H1 (cell line): ENCODE measurements at regions of chr6 and their contacts with region 1.

Region 1: DNA sequence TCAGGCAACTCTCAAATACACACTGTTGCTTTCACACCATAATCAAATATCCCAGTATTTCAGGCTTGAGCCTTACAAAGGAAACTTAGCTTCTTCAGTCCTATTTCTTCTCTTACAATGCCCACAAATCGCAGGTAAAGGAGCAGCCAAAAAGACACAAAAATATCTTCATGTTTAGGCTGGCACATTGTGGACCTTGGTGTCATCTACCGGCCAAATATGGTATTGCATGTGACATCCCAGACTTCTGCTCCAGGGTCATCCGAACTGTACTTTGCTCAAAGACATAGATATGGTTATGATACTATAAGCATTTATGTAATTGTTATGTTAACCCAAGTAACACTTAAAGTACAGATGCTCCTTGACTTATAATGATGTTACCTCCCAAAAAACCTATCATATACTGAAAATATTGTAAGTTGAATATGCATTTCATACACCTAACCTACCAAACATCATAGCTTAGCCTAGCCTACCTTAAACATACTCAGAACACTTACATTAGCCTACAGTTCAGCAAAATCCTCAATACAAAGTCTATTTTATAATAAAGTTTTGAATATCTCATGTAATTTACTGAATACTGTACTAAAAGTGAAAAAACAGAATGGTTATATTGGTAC is 4.6 kb downstream of the OR2H2 start:
- DNase-seq: peak in 1 of 2 experiments; percentile 75
- H3K4me3 ChIP-seq: no peak overlapping the region
- H3K27ac ChIP-seq: no peak overlapping the region
- H3K4me1 ChIP-seq: no peaks in the 10 kb centered on the region
- H3K27me3 ChIP-seq: no peaks in the 10 kb centered on the region
- CTCF ChIP-seq: peak; percentile 70 to 96 (median 87)
- EP300 ChIP-seq: no peak
- POLR2A ChIP-seq: peak in 1 of 2 experiments; percentile 9; a peak in 1 of 3 replicates
- RAD21 ChIP-seq: peak; percentile 99 to 100

Region 2: DNA sequence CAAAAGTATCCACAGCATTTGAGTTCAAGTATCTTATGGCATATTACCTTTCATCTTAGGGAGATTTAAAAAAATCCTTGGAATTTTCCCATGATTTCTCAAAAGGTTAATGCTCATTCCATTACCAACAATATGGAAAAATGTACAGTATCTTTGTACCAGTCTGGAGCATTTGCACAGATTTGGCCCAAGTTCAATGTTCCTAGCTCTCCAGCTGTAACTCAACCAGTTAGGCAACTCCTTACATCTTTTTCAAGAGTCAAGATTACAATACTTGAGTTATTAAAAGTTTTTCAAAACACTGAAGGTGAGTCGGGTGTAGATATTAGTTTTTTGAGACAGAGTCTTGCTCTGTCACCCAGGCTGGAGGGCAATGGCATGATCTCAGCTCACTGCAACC is 417.8 kb before region 1 on chr6:
- CTCF ChIA-PET with region 1: no interaction called
- POLR2A ChIA-PET with region 1: no interaction called
- DNase-seq: no peak
- H3K4me3 ChIP-seq: no peak overlapping the region
- H3K27ac ChIP-seq: no peak overlapping the region
- H3K4me1 ChIP-seq: no peaks in the 10 kb centered on the region
- H3K27me3 ChIP-seq: no peaks in the 10 kb centered on the region
- CTCF ChIP-seq: no peak
- EP300 ChIP-seq: no peak
- POLR2A ChIP-seq: no peak
- RAD21 ChIP-seq: no peak

Region 3: GRCh38 chr6:29368765-29369164 is 220.8 kb before region 1 on chr6 and contains the start of gene OR5V1:
- CTCF ChIA-PET with region 1: interaction called, 53 read pairs
- POLR2A ChIA-PET with region 1: no interaction called
- DNase-seq: no peak
- H3K4me3 ChIP-seq: no peak within 1 kb of the TSS
- H3K27ac ChIP-seq: no peak within 1 kb of the TSS
- H3K4me1 ChIP-seq: no peaks in the 10 kb centered on the region
- H3K27me3 ChIP-seq: no peaks in the 10 kb centered on the region
- CTCF ChIP-seq: no peak
- EP300 ChIP-seq: no peak
- POLR2A ChIP-seq: no peak
- RAD21 ChIP-seq: no peak
- total RNA-seq, gene OR5V1: not detected in 2 replicates

Region 4: GRCh38 chr6:29414588-29414987 is 174.9 kb before region 1 on chr6 and contains the start of gene OR12D1:
- CTCF ChIA-PET with region 1: interaction called, 45 read pairs
- POLR2A ChIA-PET with region 1: no interaction called
- DNase-seq: no peak
- H3K4me3 ChIP-seq: no peak within 1 kb of the TSS
- H3K27ac ChIP-seq: no peak within 1 kb of the TSS
- H3K4me1 ChIP-seq: no peaks in the 10 kb centered on the region
- H3K27me3 ChIP-seq: no peaks in the 10 kb centered on the region
- CTCF ChIP-seq: peak in 2 of 3 experiments; percentile 49 to 51; a peak in 2 of 4 replicates
- EP300 ChIP-seq: no peak
- POLR2A ChIP-seq: no peak
- RAD21 ChIP-seq: peak; percentile 67 to 75
- total RNA-seq, gene OR12D1: not detected in 2 replicates

Region 5: DNA sequence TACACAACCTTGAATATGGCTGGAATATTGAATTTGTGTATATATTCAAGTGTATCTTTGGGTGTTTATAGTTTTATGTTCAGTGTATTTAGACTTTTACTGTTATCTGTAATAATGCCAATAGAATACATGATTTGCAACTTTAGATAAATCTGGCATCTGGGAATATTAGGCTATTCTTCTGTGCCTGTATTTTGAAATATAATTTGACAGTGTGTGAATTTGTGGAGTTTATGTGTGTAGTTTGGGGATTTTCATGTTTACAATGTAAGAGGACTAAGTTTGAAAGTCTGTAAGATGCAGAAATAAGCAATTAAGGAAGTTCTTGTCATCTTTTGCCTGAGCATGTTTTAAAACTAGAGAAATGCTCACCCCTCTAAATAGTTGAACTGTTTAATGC is 150.5 kb before region 1 on chr6 and contains the start of gene OR10C1:
- CTCF ChIA-PET with region 1: interaction called, 21 read pairs
- POLR2A ChIA-PET with region 1: interaction called, 3 read pairs
- DNase-seq: no peak
- H3K4me3 ChIP-seq: no peak within 1 kb of the TSS
- H3K27ac ChIP-seq: no peak within 1 kb of the TSS
- H3K4me1 ChIP-seq: peaks cover 0 to 2% (median 0%) of the 10 kb centered on the region in 4 experiments; a peak in 1 of 7 replicates
- H3K27me3 ChIP-seq: no peaks in the 10 kb centered on the region
- CTCF ChIP-seq: no peak
- EP300 ChIP-seq: no peak
- POLR2A ChIP-seq: no peak
- RAD21 ChIP-seq: no peak
- total RNA-seq, gene OR10C1: not detected in 2 replicates

Region 6: GRCh38 chr6:29474996-29475395 is 114.5 kb before region 1 on chr6:
- CTCF ChIA-PET with region 1: no interaction called
- POLR2A ChIA-PET with region 1: no interaction called
- DNase-seq: no peak
- H3K4me3 ChIP-seq: no peak overlapping the region
- H3K27ac ChIP-seq: no peak overlapping the region
- H3K4me1 ChIP-seq: no peaks in the 10 kb centered on the region
- H3K27me3 ChIP-seq: no peaks in the 10 kb centered on the region
- CTCF ChIP-seq: no peak
- EP300 ChIP-seq: no peak
- POLR2A ChIP-seq: no peak
- RAD21 ChIP-seq: no peak

Region 7: DNA sequence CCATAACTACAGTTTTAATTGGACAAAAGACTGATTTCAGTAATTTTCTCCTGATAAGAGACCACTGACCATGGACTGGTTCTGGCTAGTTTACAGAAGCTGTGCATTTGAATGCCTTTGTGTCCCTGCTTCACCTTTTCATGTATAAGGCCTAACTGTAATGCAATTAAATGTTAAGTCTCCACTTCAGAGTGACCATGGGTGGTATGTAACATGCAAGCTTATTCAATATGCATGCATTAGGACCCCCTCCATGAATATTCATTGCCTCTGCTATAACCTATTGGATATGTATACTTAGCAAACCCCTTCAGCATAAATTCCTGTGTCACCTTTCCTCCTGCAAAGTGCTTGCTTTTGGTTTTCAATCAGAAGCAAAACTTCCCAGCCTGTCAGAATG is 32.2 kb before region 1 on chr6:
- CTCF ChIA-PET with region 1: interaction called, 11 read pairs
- POLR2A ChIA-PET with region 1: no interaction called
- DNase-seq: peak in 1 of 2 experiments; percentile 13
- H3K4me3 ChIP-seq: peak overlapping the region in 1 of 4 experiments; percentile 12; a peak in 1 of 8 replicates
- H3K27ac ChIP-seq: no peak overlapping the region
- H3K4me1 ChIP-seq: peaks cover 4 to 17% (median 16%) of the 10 kb centered on the region in 4 experiments
- H3K27me3 ChIP-seq: peaks cover 26 to 48% (median 44%) of the 10 kb centered on the region in 4 experiments
- CTCF ChIP-seq: no peak
- EP300 ChIP-seq: no peak
- POLR2A ChIP-seq: no peak
- RAD21 ChIP-seq: no peak

Region 8: GRCh38 chr6:29676981-29677601 is 87.6 kb after region 1 on chr6:
- CTCF ChIA-PET with region 1: no interaction called
- POLR2A ChIA-PET with region 1: no interaction called
- DNase-seq: no peak
- H3K4me3 ChIP-seq: no peak overlapping the region
- H3K27ac ChIP-seq: 0 out of 2 replicates have a peak overlapping the region, but pooled peaks have one; percentile 19
- H3K4me1 ChIP-seq: peaks cover 0 to 3% (median 0%) of the 10 kb centered on the region in 4 experiments; a peak in 1 of 7 replicates
- H3K27me3 ChIP-seq: no peaks in the 10 kb centered on the region
- CTCF ChIP-seq: no peak
- EP300 ChIP-seq: no peak
- POLR2A ChIP-seq: no peak
- RAD21 ChIP-seq: no peak